ENCODE measurements at regions of chr2 and their contacts with region 1.

Region 1: DNA sequence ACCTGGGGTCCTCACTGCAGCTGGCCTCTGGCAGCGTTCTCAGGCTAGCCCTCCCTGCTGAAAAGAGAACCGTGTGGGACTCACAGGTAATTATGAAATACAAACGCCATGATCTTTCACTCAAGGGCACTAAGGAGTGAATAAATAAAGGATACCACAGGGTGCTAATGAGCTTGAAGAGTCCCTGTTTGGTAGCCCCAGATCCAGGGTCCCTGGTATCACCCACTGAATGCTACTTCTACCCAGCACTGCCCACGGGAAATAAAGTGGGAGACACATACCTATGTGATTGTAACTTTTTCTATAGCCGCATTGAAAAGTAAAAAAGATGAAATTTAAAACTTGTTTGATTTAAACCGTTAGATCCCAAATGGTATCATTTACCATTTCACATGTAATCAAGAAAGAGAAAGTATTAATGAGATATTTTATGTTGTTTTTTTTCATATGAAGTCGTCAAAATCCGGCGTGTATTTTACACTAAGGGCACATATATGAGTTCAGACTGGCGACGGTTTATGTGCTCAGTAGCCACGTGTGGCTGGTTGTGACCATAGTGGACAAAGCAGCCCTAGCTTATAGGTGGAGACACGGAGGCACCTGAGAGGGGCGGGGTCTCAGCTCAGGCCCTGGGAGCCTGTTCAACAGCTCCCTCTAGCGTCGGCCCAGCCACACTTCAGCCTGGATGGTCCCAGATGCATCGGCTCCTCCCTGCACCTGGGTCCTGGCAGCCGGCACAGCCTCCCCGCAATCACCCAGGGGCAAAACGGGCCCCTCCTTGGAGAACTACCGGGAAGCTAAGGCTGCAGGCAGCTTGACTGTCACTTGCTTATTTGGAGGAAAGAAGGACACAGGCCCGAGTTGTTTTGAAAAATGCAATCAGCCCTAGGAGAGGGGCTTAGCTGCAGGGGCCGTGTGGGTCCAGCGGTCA is 39.2 kb downstream of the ODC1 start:
- DNase-seq: no peak
- H3K4me3 ChIP-seq: peak overlapping the region; percentile 17; the same call in 1 of the 2 replicates
- H3K27ac ChIP-seq: peak overlapping the region; percentile 21
- H3K27me3 ChIP-seq: no peaks in the 10 kb centered on the region
- CTCF ChIP-seq: peak; percentile 95

Region 2: DNA sequence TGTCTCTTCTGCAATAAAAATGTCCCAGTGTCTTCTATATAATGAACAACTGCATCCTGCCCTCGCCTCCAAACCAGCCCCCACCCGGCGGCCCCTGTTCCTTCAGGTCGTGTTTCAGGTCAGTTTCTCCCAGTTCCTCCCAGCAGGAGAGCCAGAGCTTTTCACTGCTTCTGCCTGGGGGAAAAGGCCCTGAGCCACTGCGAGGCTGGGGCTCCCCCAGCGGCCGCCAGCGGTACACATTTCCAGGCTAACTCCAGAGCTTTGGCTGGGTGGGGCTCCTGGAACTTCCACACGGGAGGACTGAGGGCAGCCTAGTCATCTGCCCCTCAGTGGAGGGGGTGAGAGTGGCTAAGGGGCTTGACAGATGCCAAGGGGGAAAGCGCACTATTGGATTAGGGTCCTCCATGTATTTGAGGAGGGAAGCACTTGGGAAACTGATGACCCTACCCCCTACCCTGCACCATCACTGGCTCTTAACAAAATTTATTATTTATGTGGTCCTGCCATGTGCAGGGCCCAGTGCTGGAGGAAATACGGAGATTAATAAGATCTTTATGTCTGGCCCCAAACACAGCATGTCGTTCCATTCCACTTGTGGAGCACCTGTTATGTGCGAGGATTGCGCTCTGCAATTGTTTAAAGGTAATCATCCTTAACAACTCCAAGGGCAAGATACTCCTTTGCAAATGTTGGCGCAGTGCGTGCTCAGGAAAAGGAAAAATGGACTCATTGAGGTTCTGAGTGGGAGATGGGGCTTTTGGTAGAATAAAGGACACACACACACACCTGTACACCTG is 311.4 kb before region 1 on chr2:
- CTCF ChIA-PET with region 1: interaction called, 15 read pairs
- POLR2A ChIA-PET with region 1: no interaction called
- DNase-seq: no peak
- H3K4me3 ChIP-seq: no peak overlapping the region
- H3K27ac ChIP-seq: no peak overlapping the region
- H3K27me3 ChIP-seq: peaks cover 2% of the 10 kb centered on the region
- CTCF ChIP-seq: peak; percentile 95

Region 3: DNA sequence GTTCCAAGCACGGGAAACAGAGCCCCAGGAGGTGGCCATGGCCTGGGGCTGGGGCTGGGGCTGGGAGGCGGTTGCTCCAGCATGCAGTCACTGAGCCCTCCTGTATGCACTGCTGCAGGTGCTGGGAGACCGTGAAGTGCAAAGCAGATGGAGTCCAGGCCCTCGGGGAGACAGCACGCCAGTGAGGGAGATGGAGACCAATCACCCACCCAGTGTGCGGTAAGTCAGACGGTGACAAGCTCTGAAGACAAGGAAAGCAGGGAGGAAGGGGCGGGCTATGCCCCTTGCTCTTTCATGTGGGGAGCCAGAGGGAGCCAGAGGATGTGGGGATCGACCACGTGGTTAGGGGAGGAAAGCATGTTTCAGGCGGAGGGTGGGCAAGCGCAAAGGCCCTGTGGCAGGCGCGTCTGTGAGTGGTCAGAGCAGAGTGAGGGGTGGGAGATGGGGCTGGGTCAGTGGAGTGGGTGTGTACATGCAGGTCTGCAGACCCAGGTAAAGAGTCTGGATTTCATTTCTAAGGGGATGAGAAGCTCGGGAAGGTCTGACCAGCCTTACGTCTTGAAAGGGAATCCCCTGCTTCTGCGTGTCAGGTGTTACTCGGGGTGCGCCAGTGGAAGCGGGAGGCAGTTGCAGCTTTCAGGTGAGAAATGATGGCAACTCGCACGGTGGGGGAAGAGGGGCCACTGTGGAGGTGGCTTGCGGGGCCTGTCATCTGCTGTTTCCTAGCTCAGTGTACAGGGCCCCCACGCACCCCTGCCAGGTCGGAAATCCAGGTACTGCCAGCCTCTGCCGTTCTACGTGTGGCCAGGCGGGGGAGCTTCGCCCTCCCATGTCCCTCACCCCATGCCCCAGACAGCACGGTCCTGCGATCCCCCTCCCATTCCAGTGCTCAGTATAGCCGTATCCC is 266.9 kb before region 1 on chr2:
- CTCF ChIA-PET with region 1: interaction called, 11 read pairs
- POLR2A ChIA-PET with region 1: no interaction called
- DNase-seq: no peak
- H3K4me3 ChIP-seq: no peak overlapping the region
- H3K27ac ChIP-seq: no peak overlapping the region
- H3K27me3 ChIP-seq: no peaks in the 10 kb centered on the region
- CTCF ChIP-seq: peak; percentile 44

Region 4: DNA sequence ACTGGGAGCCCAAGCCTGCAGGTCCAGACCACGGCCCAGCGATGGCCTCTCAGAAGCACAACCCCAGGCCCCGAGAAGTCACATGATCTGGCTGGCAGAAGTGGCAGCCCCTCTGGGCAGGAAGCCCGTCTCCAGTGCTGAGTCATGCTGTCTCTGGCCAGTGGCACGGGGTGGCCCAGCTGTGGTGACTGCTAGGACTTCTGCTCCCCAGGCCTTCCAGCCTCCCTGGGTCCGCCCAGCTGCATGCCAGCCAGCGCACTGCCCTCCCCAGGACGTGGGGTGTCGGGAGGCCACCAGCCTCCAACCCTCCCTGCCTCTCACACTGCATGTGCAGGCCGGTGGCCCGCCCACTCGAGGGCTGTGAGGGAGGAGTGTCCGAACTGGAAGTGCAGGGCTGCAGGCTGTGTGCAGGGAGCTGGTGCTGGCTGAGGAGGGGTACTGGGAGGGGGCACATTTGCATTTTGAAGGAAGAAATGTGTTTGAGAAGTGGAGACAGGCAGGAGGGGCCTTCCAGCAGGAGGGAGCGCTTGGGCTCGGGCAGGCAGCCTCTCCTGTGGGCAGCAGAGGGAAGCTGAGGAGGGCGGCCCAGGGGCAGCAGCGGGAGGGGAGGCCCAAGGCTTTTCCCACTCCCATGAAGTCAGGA is 123.2 kb before region 1 on chr2:
- CTCF ChIA-PET with region 1: interaction called, 10 read pairs
- POLR2A ChIA-PET with region 1: no interaction called
- DNase-seq: no peak
- H3K4me3 ChIP-seq: no peak overlapping the region
- H3K27ac ChIP-seq: peak overlapping the region; percentile 21
- H3K27me3 ChIP-seq: no peaks in the 10 kb centered on the region
- CTCF ChIP-seq: no peak

Region 5: DNA sequence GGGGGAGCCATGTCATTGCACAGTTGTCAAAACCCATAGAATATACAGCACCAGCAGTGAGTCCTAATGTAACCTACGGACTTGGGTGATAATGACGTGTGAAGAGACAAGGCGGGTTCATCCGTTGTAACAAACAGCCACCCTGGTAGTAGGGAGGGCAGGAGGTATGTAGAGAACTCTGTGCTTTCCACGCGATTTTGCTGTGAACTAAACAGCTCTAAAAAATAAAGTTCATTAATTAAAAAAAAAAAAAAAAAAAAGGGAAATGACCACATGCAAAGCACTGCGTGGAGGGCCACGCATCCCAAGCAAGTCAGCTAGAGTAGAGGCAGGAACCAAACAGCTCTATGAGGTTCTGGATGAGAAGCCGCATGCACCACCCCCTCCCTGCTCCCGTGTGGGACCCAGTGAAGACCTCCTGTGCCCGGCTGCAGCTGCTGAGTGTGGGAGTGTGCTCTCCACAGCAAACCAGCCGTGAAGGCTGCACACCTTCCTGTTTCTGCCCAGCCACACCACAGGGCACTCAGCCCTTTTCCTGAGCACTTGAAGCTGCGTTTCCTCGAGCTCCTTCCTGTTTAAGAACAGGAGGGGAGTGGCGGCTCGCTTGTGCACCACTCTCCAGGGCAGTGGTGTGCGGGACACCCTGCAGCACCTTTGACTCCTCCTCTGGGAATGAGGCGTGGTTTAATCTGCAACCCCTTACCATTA is 26.4 kb before region 1 on chr2:
- CTCF ChIA-PET with region 1: interaction called, 14 read pairs
- POLR2A ChIA-PET with region 1: no interaction called
- DNase-seq: no peak
- H3K4me3 ChIP-seq: no peak overlapping the region
- H3K27ac ChIP-seq: no peak overlapping the region
- H3K27me3 ChIP-seq: no peaks in the 10 kb centered on the region
- CTCF ChIP-seq: no peak

Region 6: GRCh38 chr2:10424051-10424450 is 15.1 kb after region 1 on chr2:
- CTCF ChIA-PET with region 1: interaction called, 36 read pairs
- POLR2A ChIA-PET with region 1: interaction called, 10 read pairs
- DNase-seq: peak; percentile 51
- H3K4me3 ChIP-seq: no peak overlapping the region
- H3K27ac ChIP-seq: peak overlapping the region; percentile 21
- H3K27me3 ChIP-seq: no peaks in the 10 kb centered on the region
- CTCF ChIP-seq: no peak